ENCODE measurements at regions of chr12 and their contacts with region 1.

Region 1: DNA sequence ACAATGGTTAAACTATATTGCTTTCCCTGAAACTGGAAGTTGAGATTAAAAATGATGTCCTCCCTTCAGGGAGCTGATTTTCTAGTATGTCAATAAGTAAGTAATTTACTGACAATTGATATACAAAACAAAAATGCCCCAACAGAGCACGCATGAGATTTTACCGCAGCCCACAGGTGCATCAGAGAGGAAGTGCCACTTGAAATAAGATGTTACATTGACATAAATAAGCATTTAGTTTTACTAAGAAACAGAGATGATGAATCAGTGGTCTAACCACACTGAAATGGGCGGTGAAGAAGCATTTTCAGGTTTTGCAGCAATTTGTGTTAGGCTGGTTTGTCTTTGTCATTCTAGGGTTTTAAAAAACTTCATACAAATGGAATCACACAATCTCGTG is 8.8 kb upstream of the CLECL1 start:
- DNase-seq: peak; percentile 95
- ATAC-seq: peak; percentile 69
- H3K4me3 Mint-ChIP-seq: peak overlapping the region; percentile 74
- H3K27ac Mint-ChIP-seq: peak overlapping the region; percentile 90
- H3K4me1 Mint-ChIP-seq: peaks cover 71% of the 10 kb centered on the region
- H3K27me3 Mint-ChIP-seq: no peaks in the 10 kb centered on the region
- CTCF ChIP-seq: no peak

Region 2: DNA sequence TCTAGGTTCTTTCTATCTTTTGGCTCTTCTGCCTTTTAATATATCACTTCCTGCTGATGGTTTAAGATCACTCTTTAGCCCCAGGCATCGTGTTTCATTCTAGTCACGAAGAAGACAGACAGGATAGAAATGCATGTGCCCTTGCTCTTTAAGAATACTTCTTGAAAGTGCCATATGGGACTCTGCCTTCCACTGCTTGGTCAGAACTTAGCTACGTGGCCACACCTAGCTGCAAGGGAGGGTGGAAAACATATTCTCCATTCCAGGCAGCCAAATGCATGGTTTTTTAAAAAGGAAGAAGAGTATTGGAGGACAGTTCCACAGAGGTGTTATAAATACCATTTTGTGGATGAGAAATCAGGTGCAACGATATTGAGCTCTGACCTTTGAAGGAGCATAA is 277.3 kb before region 1 on chr12:
- CTCF ChIA-PET with region 1: no interaction called
- POLR2A ChIA-PET with region 1: no interaction called
- intact Hi-C with region 1: no loop called
- DNase-seq: no peak
- ATAC-seq: no peak
- H3K4me3 Mint-ChIP-seq: no peak overlapping the region
- H3K27ac Mint-ChIP-seq: no peak overlapping the region
- H3K4me1 Mint-ChIP-seq: peaks cover 2% of the 10 kb centered on the region
- H3K27me3 Mint-ChIP-seq: no peaks in the 10 kb centered on the region
- CTCF ChIP-seq: no peak

Region 3: DNA sequence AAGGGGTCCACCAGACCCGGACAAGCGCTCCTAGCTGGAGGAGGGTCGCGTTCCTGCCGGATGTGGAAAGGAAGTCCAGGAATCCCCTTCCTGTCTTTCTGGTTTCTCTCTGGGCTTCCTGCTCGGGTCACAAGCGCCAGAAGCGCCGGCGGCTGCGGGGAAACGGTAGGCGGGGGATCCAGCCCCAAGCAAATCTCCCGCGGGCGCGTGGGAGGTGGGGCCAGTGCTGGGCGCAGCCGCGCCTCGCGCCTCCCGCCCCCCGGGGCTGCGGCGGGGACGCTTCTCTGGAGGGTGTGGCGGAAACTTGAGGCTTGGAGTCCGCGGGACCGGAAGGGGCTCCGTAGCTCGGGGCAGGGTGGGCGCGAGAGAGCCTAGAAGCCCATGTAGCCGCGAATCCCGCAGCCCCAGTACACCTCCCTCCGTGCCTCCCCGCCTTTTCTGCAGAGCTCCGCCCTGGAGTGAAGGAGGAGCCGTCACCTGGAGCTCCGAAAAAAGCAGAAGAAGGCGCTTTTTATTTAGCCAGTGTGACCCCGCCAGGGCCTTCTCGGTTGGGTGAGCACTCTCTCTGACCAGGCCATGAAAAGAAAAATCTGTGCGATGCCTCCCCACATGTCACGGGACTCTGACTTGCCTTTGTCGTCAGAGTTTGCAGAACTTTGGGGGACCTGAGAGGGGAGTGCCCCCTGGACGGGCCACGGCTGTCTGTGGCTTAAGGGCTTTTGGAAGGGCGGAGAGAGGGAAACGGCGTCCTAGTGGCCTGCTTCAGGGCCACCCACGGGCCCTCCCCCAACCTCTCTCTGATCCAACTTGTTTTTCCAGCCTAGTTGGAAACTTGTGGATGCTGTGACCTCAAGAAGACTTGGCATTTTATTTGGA is 93.7 kb before region 1 on chr12:
- CTCF ChIA-PET with region 1: interaction called, 7 read pairs
- POLR2A ChIA-PET with region 1: interaction called, 42 read pairs
- intact Hi-C with region 1: loop called (anchors 5 kb)
- DNase-seq: peak; percentile 95
- ATAC-seq: peak; percentile 72
- H3K4me3 Mint-ChIP-seq: peak overlapping the region; percentile 98
- H3K27ac Mint-ChIP-seq: peak overlapping the region; percentile 99
- H3K4me1 Mint-ChIP-seq: peaks cover 53% of the 10 kb centered on the region
- H3K27me3 Mint-ChIP-seq: no peaks in the 10 kb centered on the region
- CTCF ChIP-seq: no peak

Region 4: DNA sequence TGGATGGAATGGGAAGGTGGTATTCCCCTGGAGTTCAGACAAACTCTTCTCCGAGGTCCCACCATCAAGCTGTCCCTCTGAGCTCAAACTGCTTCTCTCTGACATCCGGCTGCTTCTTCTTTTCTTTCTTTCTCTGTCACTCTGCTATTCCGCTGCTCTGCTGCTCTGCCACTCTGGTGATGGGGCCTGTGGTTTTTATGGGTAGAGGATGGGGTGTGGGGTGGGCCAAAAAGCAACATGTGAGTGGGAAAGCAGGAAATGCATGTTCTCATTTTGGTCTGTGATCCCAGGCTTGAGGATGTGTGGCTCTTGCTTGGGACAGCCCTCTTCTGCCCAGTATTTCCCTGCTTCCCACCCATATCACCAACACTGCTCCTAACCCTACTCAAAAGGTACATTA is 39.5 kb before region 1 on chr12:
- CTCF ChIA-PET with region 1: interaction called, 7 read pairs
- POLR2A ChIA-PET with region 1: interaction called, 12 read pairs
- intact Hi-C with region 1: no loop called
- DNase-seq: peak; percentile 80
- ATAC-seq: peak; percentile 58
- H3K4me3 Mint-ChIP-seq: peak overlapping the region; percentile 71
- H3K27ac Mint-ChIP-seq: peak overlapping the region; percentile 95
- H3K4me1 Mint-ChIP-seq: peaks cover 72% of the 10 kb centered on the region
- H3K27me3 Mint-ChIP-seq: no peaks in the 10 kb centered on the region
- CTCF ChIP-seq: no peak

Region 5: GRCh38 chr12:9760699-9761418 is 19.1 kb after region 1 on chr12 and contains the start of gene CD69:
- CTCF ChIA-PET with region 1: interaction called, 83 read pairs
- POLR2A ChIA-PET with region 1: interaction called, 56 read pairs
- intact Hi-C with region 1: no loop called
- DNase-seq: peak; percentile 89
- ATAC-seq: peak; percentile 57
- H3K4me3 Mint-ChIP-seq: peak within 1 kb of the TSS; percentile 97
- H3K27ac Mint-ChIP-seq: peak within 1 kb of the TSS; percentile 99
- H3K4me1 Mint-ChIP-seq: peaks cover 34% of the 10 kb centered on the region
- H3K27me3 Mint-ChIP-seq: no peaks in the 10 kb centered on the region
- CTCF ChIP-seq: no peak
- total RNA-seq, gene CD69: 166 to 174 TPM

Region 6: GRCh38 chr12:9808504-9808903 is 66.8 kb after region 1 on chr12:
- CTCF ChIA-PET with region 1: interaction called, 791 read pairs
- POLR2A ChIA-PET with region 1: interaction called, 4 read pairs
- intact Hi-C with region 1: no loop called
- DNase-seq: no peak
- ATAC-seq: no peak
- H3K4me3 Mint-ChIP-seq: no peak overlapping the region
- H3K27ac Mint-ChIP-seq: no peak overlapping the region
- H3K4me1 Mint-ChIP-seq: peaks cover 8% of the 10 kb centered on the region
- H3K27me3 Mint-ChIP-seq: peaks cover 7% of the 10 kb centered on the region
- CTCF ChIP-seq: no peak

Region 7: DNA sequence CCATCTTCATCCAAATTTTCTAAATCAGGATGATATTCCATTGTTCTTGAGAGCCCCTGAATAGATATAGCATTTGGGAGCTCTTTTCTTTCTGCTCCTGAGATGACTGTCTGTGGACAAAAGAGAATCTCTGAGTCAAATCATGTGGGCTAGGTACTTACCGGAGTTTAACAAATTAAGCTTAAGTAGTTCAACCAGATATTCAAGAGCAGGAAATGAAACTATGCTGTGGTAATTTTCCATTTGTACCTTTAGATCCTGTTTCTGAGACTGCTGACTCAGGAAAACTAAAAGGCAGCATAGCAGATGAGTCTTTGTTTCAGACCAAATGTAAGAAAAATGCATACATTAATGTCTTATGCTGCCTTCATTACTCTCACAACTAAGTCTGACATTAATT is 388.3 kb after region 1 on chr12 and contains the start of gene CLEC7A:
- CTCF ChIA-PET with region 1: no interaction called
- POLR2A ChIA-PET with region 1: no interaction called
- intact Hi-C with region 1: loop called (anchors 10 kb)
- DNase-seq: no peak
- ATAC-seq: peak; percentile 89
- H3K4me3 Mint-ChIP-seq: no peak within 1 kb of the TSS
- H3K27ac Mint-ChIP-seq: no peak within 1 kb of the TSS
- H3K4me1 Mint-ChIP-seq: peaks cover 13% of the 10 kb centered on the region
- H3K27me3 Mint-ChIP-seq: peaks cover 10% of the 10 kb centered on the region
- CTCF ChIP-seq: no peak
- total RNA-seq, gene CLEC7A: not detected

Measured in activated CD8-positive, alpha-beta T cell treated with anti-CD3 and anti-CD28 coated beads for 36 hours (primary cell).